Gastrocnemius medialis (tissue), 4 donors: ENCODE measurements at regions of chr7 and their contacts with region 1.

Region 1: GRCh38 chr7:150356265-150356897 is 12.2 kb upstream of the REPIN1 start:
- DNase-seq: no peak
- ATAC-seq: peak; percentile 20 to 56
- H3K4me3 ChIP-seq: no peak overlapping the region
- H3K27ac ChIP-seq: peak overlapping the region in 1 of 4 donors; percentile 8
- H3K4me1 ChIP-seq: peaks cover 5 to 6% of the 10 kb centered on the region in 2 donors
- H3K27me3 ChIP-seq: no peaks in the 10 kb centered on the region
- CTCF ChIP-seq: peak; percentile 51 to 78 (median 60)
- POLR2A ChIP-seq: no peak

Region 2: GRCh38 chr7:150388709-150389531 is 32.5 kb after region 1 on chr7:
- in situ Hi-C with region 1: no loop called
- intact Hi-C with region 1: loop called (anchors 1 kb)
- DNase-seq: peak; percentile 70 to 93
- ATAC-seq: peak; percentile 90 to 92
- H3K4me3 ChIP-seq: no peak overlapping the region
- H3K27ac ChIP-seq: peak overlapping the region; percentile 72 to 80 (median 76)
- H3K4me1 ChIP-seq: peaks cover 14 to 33% of the 10 kb centered on the region in 2 donors
- H3K27me3 ChIP-seq: no peaks in the 10 kb centered on the region
- CTCF ChIP-seq: peak; percentile 89 to 98 (median 93)
- POLR2A ChIP-seq: no peak

Region 3: GRCh38 chr7:150420987-150421674 is 64.8 kb after region 1 on chr7:
- in situ Hi-C with region 1: no loop called
- intact Hi-C with region 1: loop called (anchors 2 kb)
- DNase-seq: peak; percentile 57 to 65
- ATAC-seq: peak; percentile 97 to 99
- H3K4me3 ChIP-seq: peak overlapping the region in 1 of 4 donors; percentile 32
- H3K27ac ChIP-seq: no peak overlapping the region
- H3K4me1 ChIP-seq: no peaks in the 10 kb centered on the region
- H3K27me3 ChIP-seq: no peaks in the 10 kb centered on the region
- CTCF ChIP-seq: peak; percentile 66 to 94 (median 77)
- POLR2A ChIP-seq: no peak